ENCODE measurements at regions of chr17 and their contacts with region 1.

Region 1: GRCh38 chr17:28902819-28903545 is at the start of gene DHRS13:
- DNase-seq: peak; percentile 93 to 98 (median 96)
- H3K4me3 ChIP-seq: peak within 1 kb of the TSS; percentile 77 to 95
- H3K4me3 Mint-ChIP-seq: peak within 1 kb of the TSS; percentile 83 to 97 (median 90)
- H3K27ac ChIP-seq: peak within 1 kb of the TSS; percentile 76
- H3K27ac Mint-ChIP-seq: peak within 1 kb of the TSS; percentile 89 to 97 (median 93)
- H3K4me1 ChIP-seq: peaks cover 35% of the 10 kb centered on the region
- H3K4me1 Mint-ChIP-seq: peaks cover 31 to 50% (median 37%) of the 10 kb centered on the region in 4 donors
- H3K27me3 ChIP-seq: no peaks in the 10 kb centered on the region
- H3K27me3 Mint-ChIP-seq: no peaks in the 10 kb centered on the region
- total RNA-seq, gene DHRS13: 44.6 to 49.6 TPM

Region 2: GRCh38 chr17:28812091-28812747 is 90.8 kb before region 1 on chr17:
- CTCF ChIA-PET with region 1: interaction called, 4 read pairs
- POLR2A ChIA-PET with region 1: interaction called, 3 read pairs
- intact Hi-C with region 1: loop called (anchors 1 kb)
- DNase-seq: peak; percentile 94 to 97 (median 95)
- H3K4me3 ChIP-seq: peak overlapping the region; percentile 75 to 84
- H3K4me3 Mint-ChIP-seq: peak overlapping the region; percentile 90 to 98 (median 93)
- H3K27ac ChIP-seq: peak overlapping the region; percentile 90
- H3K27ac Mint-ChIP-seq: peak overlapping the region; percentile 94 to 100 (median 98)
- H3K4me1 ChIP-seq: peaks cover 44% of the 10 kb centered on the region
- H3K4me1 Mint-ChIP-seq: peaks cover 19 to 47% (median 37%) of the 10 kb centered on the region in 4 donors
- H3K27me3 ChIP-seq: no peaks in the 10 kb centered on the region
- H3K27me3 Mint-ChIP-seq: no peaks in the 10 kb centered on the region

Region 3: DNA sequence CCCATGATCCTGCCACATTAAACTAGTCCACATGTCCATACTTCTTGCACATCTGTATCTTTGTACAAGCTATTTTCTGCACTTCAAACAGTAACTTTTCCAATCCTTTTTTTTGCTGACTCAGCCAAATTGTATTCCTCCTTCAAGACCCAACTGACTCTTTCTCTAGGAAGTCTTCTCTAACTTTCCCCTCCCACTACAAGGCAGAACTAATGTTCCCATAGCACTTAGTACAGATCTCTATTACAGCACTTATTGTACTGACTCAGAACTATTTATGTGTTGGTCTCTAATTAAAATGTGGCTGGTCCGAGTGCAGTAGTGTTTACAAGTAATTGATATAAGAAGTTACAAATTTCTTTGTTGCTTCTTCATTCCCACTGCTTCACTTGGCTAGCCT is 68.6 kb before region 1 on chr17:
- CTCF ChIA-PET with region 1: no interaction called
- POLR2A ChIA-PET with region 1: no interaction called
- intact Hi-C with region 1: no loop called
- DNase-seq: no peak
- H3K4me3 ChIP-seq: no peak overlapping the region
- H3K4me3 Mint-ChIP-seq: no peak overlapping the region
- H3K27ac ChIP-seq: no peak overlapping the region
- H3K27ac Mint-ChIP-seq: peak overlapping the region in 4 of 7 donors; percentile 4 to 93 (median 34)
- H3K4me1 ChIP-seq: peaks cover 4% of the 10 kb centered on the region
- H3K4me1 Mint-ChIP-seq: peaks cover 14 to 21% (median 17%) of the 10 kb centered on the region in 4 donors
- H3K27me3 ChIP-seq: no peaks in the 10 kb centered on the region
- H3K27me3 Mint-ChIP-seq: no peaks in the 10 kb centered on the region

Region 4: DNA sequence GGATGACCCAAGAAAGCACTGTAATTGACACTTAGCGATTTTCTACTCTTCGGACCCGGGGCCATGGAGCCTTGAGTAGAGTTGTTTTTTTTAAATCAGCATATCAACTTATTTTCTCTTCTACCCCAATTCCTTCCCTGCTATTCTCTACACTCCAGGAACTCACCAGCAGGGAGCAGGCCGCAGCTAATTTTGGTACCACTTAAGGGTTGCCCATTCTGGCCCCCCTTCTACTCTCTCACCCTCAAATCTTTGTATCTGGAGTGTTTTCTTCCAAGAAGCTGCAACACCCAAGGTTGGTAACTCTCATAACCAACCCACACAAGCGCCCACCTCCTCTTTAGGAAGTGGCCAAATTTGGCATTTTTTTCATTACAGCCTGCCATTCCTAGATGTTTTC is 53.7 kb before region 1 on chr17:
- CTCF ChIA-PET with region 1: interaction called, 14 read pairs
- POLR2A ChIA-PET with region 1: no interaction called
- intact Hi-C with region 1: loop called (anchors 1 kb)
- DNase-seq: no peak
- H3K4me3 ChIP-seq: no peak overlapping the region
- H3K4me3 Mint-ChIP-seq: no peak overlapping the region
- H3K27ac ChIP-seq: no peak overlapping the region
- H3K27ac Mint-ChIP-seq: no peak overlapping the region
- H3K4me1 ChIP-seq: peaks cover 3% of the 10 kb centered on the region
- H3K4me1 Mint-ChIP-seq: peaks cover 0 to 3% (median under 1%) of the 10 kb centered on the region in 4 donors
- H3K27me3 ChIP-seq: no peaks in the 10 kb centered on the region
- H3K27me3 Mint-ChIP-seq: no peaks in the 10 kb centered on the region

Region 5: GRCh38 chr17:28871056-28871579 is 31.9 kb before region 1 on chr17:
- CTCF ChIA-PET with region 1: interaction called, 10 read pairs
- POLR2A ChIA-PET with region 1: interaction called, 27 read pairs
- intact Hi-C with region 1: no loop called
- DNase-seq: peak in 4 of 5 donors; percentile 23 to 40 (median 38)
- H3K4me3 ChIP-seq: no peak overlapping the region
- H3K4me3 Mint-ChIP-seq: peak overlapping the region in 6 of 8 donors; percentile 21 to 71 (median 63)
- H3K27ac ChIP-seq: peak overlapping the region; percentile 22
- H3K27ac Mint-ChIP-seq: peak overlapping the region; percentile 33 to 99 (median 94)
- H3K4me1 ChIP-seq: peaks cover 16% of the 10 kb centered on the region
- H3K4me1 Mint-ChIP-seq: peaks cover 5 to 16% (median 11%) of the 10 kb centered on the region in 4 donors
- H3K27me3 ChIP-seq: no peaks in the 10 kb centered on the region
- H3K27me3 Mint-ChIP-seq: no peaks in the 10 kb centered on the region

Region 6: GRCh38 chr17:28916302-28916934 is 13.4 kb after region 1 on chr17:
- CTCF ChIA-PET with region 1: interaction called, 10 read pairs
- POLR2A ChIA-PET with region 1: interaction called, 45 read pairs
- intact Hi-C with region 1: loop called (anchors 1 kb)
- DNase-seq: peak; percentile 40 to 59 (median 45)
- H3K4me3 ChIP-seq: no peak overlapping the region
- H3K4me3 Mint-ChIP-seq: no peak overlapping the region
- H3K27ac ChIP-seq: no peak overlapping the region
- H3K27ac Mint-ChIP-seq: peak overlapping the region in 6 of 7 donors; percentile 70 to 91 (median 82)
- H3K4me1 ChIP-seq: no peaks in the 10 kb centered on the region
- H3K4me1 Mint-ChIP-seq: peaks cover 0 to 6% (median 4%) of the 10 kb centered on the region in 4 donors
- H3K27me3 ChIP-seq: no peaks in the 10 kb centered on the region
- H3K27me3 Mint-ChIP-seq: no peaks in the 10 kb centered on the region

Measured in CD4-positive, alpha-beta memory T cell (primary cell).